ENCODE measurements at regions of chr20 and their contacts with region 1.

Region 1: GRCh38 chr20:33862709-33863403 is 51.7 kb downstream of the CHMP4B start:
- DNase-seq: peak; percentile 66 to 81 (median 69)
- H3K4me3 ChIP-seq: no peak overlapping the region
- H3K27ac ChIP-seq: no peak overlapping the region
- H3K4me1 ChIP-seq: peaks cover 2% of the 10 kb centered on the region
- H3K27me3 ChIP-seq: no peaks in the 10 kb centered on the region
- CTCF ChIP-seq: peak; percentile 52 to 58 (median 57)
- EP300 ChIP-seq: no peak
- POLR2A ChIP-seq: no peak

Region 2: DNA sequence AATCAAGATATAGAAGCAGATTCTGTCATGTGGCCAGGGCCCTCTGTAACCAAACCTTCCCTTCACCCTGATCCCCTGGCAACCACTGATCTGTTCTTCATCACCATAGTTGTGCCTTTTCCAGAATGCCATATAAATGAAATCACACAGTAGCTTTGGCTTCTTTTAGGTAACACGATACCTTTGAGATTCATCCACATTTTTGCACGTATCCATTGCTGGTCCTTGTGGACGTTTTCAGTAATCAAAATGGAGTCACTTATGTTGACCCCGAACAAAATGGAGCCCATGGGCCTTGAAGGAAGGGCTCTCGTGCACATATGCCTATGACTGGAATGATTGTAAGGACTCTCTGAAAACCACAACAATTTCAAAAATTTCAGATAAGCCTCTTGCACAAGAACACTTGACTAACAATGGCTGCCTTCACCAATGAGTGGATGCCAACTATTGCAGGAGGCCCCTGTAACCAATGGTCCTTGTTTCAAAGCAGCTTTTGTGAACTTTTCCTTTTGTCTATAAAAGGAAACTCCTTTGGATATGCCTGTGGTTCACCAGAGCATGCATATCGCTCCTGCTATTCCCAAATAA is 46.6 kb after region 1 on chr20:
- intact Hi-C with region 1: no loop called
- DNase-seq: peak in 2 of 5 donors; percentile 38 to 42
- H3K4me3 ChIP-seq: no peak overlapping the region
- H3K27ac ChIP-seq: peak overlapping the region in 1 of 2 donors; percentile 24
- H3K4me1 ChIP-seq: peaks cover 13% of the 10 kb centered on the region
- H3K27me3 ChIP-seq: no peaks in the 10 kb centered on the region
- CTCF ChIP-seq: no peak
- EP300 ChIP-seq: no peak
- POLR2A ChIP-seq: no peak

Region 3: GRCh38 chr20:34069341-34070078 is 206.7 kb after region 1 on chr20:
- intact Hi-C with region 1: loop called (anchors 2 to 5 kb)
- DNase-seq: peak; percentile 72 to 85 (median 82)
- H3K4me3 ChIP-seq: no peak overlapping the region
- H3K27ac ChIP-seq: no peak overlapping the region
- H3K4me1 ChIP-seq: peaks cover 2% of the 10 kb centered on the region
- H3K27me3 ChIP-seq: no peaks in the 10 kb centered on the region
- CTCF ChIP-seq: peak; percentile 84 to 92 (median 84)
- EP300 ChIP-seq: no peak
- POLR2A ChIP-seq: no peak

Region 4: DNA sequence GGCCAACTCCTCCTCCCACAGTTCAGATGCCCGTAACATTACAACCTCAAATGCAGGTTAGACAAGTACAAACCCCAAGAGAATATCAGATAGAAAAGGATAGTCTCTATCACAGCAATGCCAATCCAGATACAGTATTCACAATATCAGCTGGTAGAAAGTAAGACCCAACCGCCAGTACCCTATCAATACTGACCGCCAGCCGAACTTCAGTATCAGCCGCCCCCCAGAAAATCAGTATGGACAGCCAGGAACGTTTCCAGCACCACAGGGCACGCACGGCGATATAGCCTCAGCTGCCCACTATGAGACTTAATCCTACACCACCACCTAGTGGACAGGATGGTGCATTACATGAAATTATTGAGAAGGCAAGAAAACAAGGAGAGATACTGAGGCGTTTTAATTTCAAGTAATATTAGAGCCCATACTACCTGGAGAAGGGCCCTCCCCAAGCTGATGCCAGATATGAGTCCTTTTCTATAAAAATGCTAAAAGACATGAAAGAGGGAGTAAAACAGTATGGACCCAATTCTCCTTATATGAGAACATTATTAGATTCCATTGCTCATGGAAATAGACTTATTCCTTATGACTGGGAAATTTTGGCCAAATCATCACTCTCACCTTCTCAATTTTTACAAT is 266.8 kb after region 1 on chr20:
- intact Hi-C with region 1: loop called in 2 of 4 experiments (anchors 5 to 10 kb)
- DNase-seq: peak; percentile 43 to 66 (median 54)
- H3K4me3 ChIP-seq: no peak overlapping the region
- H3K27ac ChIP-seq: no peak overlapping the region
- H3K4me1 ChIP-seq: no peaks in the 10 kb centered on the region
- H3K27me3 ChIP-seq: no peaks in the 10 kb centered on the region
- CTCF ChIP-seq: peak; percentile 56 to 81 (median 78)
- EP300 ChIP-seq: no peak
- POLR2A ChIP-seq: no peak